ENCODE measurements at regions of chr16 and their contacts with region 1.

Region 1: DNA sequence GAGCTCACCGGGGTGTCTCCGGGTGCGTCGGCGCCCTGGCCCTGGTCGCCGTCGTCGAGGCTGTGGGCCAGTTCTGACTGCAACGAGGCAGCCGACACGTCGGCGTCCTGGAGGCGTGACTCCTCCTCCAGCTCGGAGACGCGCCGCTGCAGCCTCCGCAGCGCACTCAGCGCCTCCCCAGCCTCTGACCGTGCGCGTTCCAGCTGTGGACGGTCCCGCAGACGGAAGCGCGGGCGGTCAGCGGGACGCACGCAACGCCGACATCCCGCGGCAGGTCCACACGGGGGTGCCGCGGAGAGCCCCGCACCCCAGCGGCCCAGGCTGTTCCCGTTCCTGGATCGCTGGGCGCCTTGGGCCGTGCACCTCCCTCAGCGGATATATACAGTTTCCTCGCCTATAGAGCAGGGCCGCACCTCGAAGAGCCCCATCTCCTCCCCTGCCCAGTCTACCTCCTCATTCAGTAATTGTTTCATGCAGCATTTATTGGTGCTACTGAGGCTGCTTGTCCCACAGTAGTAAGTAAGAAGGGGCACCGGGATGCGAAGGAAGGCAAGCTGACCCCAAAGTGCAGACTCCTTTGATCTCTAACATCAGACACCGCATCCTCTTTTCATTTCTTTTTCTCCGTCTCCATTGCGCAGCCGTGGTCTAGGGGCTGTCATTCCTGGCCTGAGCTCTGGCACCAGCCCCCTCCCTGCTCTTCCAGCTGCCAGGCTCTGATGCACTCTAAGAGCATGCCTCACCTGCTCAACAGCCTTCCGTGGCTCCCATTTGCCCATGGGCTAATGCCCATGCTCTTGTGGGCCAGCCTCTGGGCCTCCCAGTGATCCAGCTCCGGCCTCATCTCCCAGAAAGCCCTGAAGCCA is 5.9 kb downstream of the THOC6 start:
- DNase-seq: no peak
- ATAC-seq: no peak
- H3K4me3 Mint-ChIP-seq: no peak overlapping the region
- H3K27ac Mint-ChIP-seq: no peak overlapping the region
- H3K4me1 Mint-ChIP-seq: peaks cover 13% of the 10 kb centered on the region
- H3K27me3 Mint-ChIP-seq: peaks cover 37% of the 10 kb centered on the region
- CTCF ChIP-seq: no peak

Region 2: GRCh38 chr16:3003582-3004302 is 26.0 kb before region 1 on chr16:
- CTCF ChIA-PET with region 1: interaction called, 62 read pairs
- POLR2A ChIA-PET with region 1: interaction called, 23 read pairs
- intact Hi-C with region 1: loop called (anchors 1 kb)
- DNase-seq: peak; percentile 87
- ATAC-seq: peak; percentile 98
- H3K4me3 Mint-ChIP-seq: peak overlapping the region; percentile 67
- H3K27ac Mint-ChIP-seq: peak overlapping the region; percentile 53
- H3K4me1 Mint-ChIP-seq: peaks cover 28% of the 10 kb centered on the region
- H3K27me3 Mint-ChIP-seq: peaks cover 11% of the 10 kb centered on the region
- CTCF ChIP-seq: no peak

Region 3: DNA sequence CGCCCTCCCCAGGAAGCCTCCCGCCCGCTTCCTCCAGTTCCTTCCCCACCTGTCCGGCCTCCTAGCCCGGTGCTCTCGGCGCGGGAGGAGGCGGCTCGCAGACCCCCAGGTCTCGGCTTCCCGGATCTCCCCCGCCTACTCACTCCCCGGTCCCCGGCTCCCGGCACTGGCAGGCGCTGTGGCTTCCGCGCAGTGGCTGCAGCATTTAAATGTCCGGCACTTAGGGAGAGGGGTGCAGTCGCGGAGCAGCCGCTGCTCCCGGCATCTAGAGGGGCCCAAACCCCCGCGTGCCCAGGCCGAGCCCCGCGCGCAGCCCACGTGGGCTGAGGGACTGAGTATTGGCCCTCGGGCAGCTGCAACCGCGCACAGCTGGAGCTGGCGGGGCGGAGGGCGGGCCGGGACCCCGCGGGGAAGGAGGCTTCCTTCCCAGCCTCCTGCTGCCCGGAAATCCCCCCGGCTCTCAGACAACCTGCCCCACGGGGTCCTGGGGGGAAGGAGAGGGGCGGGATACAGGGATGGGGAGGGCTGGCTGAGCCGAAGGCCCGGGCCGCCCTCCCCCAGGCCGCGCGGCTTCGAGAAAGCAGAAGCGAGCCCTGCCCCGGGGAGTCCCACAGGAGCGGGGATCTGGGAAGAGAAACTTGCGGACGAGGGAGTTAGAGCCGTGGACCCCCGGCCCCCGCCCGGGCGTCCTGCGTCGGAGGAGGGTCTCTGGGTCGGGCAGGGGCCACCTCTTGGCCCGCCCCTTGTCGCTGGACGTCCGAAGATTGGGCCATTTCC is 16.1 kb after region 1 on chr16:
- CTCF ChIA-PET with region 1: interaction called, 4 read pairs
- POLR2A ChIA-PET with region 1: interaction called, 6 read pairs
- intact Hi-C with region 1: loop called (anchors 2 kb)
- DNase-seq: peak; percentile 53
- ATAC-seq: peak; percentile 83
- H3K4me3 Mint-ChIP-seq: peak overlapping the region; percentile 76
- H3K27ac Mint-ChIP-seq: no peak overlapping the region
- H3K4me1 Mint-ChIP-seq: peaks cover 11% of the 10 kb centered on the region
- H3K27me3 Mint-ChIP-seq: peaks cover 41% of the 10 kb centered on the region
- CTCF ChIP-seq: no peak

Measured in activated B cell treated with CpG ODN at 0.5 μM for 24 hours (primary cell).